Vagina (tissue), 2 donors: ENCODE measurements at regions of chr4 and their contacts with region 1.

Region 1: GRCh38 chr4:153083447-153083947 is 120.7 kb upstream of the TRIM2 start:
- DNase-seq: peak in 1 of 2 donors; percentile 84
- H3K4me3 ChIP-seq: no peak overlapping the region
- H3K27ac ChIP-seq: peak overlapping the region; percentile 40
- H3K4me1 ChIP-seq: peaks cover 27% of the 10 kb centered on the region
- H3K27me3 ChIP-seq: no peaks in the 10 kb centered on the region
- CTCF ChIP-seq: peak; percentile 41 to 76 (median 65)
- POLR2A ChIP-seq: no peak

Region 2: DNA sequence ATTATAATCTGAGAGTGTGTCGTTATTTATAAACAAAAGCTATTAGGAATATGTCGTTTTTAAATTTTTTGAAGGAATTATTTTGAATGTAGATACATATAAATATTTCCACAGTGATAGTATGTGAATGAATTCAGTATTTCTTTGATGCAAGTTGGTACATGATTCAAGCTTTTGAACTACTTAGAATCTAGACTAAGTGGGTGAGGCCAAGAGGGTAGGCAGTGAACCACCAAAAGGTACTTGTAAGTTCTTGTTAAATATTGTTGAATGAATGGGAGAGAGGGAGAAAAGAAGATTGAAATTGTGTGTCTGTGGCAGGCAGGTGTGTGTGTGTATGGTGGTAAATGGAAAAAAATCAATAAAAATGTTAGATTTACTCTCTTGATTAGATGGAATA is 234.1 kb before region 1 on chr4:
- intact Hi-C with region 1: loop called (anchors 5 kb)
- DNase-seq: no peak
- H3K4me3 ChIP-seq: no peak overlapping the region
- H3K27ac ChIP-seq: no peak overlapping the region
- H3K4me1 ChIP-seq: peaks cover 10% of the 10 kb centered on the region
- H3K27me3 ChIP-seq: no peaks in the 10 kb centered on the region
- CTCF ChIP-seq: no peak
- POLR2A ChIP-seq: no peak

Region 3: DNA sequence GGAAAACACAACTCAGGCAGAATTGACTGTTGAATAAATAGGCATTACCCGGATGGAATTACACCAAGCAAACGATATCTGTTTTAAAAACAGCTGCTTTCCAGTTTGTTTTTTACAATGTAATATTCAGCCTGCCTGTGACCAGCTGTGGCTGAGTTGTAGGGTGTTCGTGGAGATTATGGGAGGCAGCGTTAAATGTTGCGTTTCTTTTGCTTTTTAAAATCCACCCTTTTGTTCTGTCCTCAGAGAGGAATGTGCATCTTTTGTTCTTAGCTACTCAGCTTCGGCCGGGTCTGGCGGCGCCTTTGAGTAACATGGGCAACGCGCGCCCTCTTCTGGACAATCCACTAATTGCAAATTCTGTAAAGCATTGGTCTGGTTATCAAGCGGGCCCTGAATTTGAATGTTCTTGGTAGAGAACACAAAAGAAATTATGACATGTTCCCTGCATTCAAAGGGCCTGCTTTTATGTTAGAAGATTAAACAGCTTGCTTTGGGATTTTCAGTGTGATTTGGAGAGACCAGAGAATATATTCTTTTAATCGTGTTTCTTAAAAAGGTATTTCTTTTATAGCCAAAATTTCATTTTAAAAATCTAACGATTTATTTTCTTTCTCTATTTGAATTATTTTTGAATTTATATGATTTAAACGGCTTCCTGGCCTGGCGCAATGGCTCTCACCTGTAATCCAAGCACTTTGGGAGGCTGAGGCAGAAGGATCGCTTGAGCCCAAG is 44.4 kb after region 1 on chr4:
- intact Hi-C with region 1: loop called (anchors 5 kb)
- DNase-seq: peak in 1 of 2 donors; percentile 88
- H3K4me3 ChIP-seq: no peak overlapping the region
- H3K27ac ChIP-seq: no peak overlapping the region
- H3K4me1 ChIP-seq: no peaks in the 10 kb centered on the region
- H3K27me3 ChIP-seq: no peaks in the 10 kb centered on the region
- CTCF ChIP-seq: peak; percentile 79 to 82 (median 81)
- POLR2A ChIP-seq: no peak